Activated T-helper 2 cell treated with anti-CD3 and anti-CD28 coated beads, Interferon-gamma antibody, Interleukin-2, Interleukin-4, amounts not matched to agents 10 μg/mL and 5 μg/mL and 100 μg/mL, durations not matched to agents 14 hours and 24 hours and 36 hours (primary cell): ENCODE measurements at regions of chr3 and their contacts with region 1.

Region 1: DNA sequence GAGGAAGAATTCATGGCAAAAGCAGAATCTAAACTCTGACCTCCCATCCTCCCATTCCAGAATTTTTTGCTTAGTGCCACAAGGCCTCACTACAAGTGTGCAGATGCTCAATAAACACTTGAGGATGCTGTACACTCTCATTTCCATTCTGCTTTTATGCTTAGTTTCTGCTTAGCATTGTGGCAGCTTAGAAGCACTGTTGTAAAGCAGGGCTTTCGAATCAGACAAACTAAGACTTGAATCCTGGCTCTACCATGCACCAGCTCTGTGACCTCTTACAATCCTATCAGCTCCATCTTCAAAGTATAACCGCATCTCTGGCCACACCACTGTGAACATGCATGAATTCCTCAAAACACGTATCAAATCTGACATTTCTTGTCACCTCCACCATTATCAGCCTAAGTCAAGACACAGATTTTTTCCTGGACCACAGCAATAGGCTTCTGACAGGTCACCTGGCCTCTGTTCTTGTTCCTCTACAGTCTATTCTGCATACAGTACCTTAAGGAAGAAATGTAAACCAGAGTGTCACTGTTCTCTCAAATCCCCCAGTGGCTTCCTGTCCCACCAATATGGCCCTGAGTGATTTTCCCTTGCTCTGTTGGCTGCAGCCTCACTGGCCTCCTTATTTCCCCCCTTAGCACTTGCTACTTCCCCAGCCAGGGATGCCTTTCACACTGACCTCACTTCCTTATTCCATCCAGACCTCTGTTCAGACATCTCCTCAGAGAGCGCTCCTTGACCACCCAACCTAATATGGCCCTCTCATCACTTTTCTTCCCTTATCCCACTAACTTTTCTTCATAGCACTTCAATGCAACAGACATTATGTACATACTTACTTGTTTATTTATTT is 8.1 kb upstream of the PHC3 start:
- DNase-seq: no peak
- H3K4me3 Mint-ChIP-seq: no peak overlapping the region
- H3K27ac Mint-ChIP-seq: no peak overlapping the region
- H3K4me1 Mint-ChIP-seq: peaks cover 6% of the 10 kb centered on the region
- H3K27me3 Mint-ChIP-seq: peaks cover 9% of the 10 kb centered on the region

Region 2: GRCh38 chr3:170162630-170163029 is 27.0 kb before region 1 on chr3:
- intact Hi-C with region 1: no loop called
- DNase-seq: no peak
- H3K4me3 Mint-ChIP-seq: no peak overlapping the region
- H3K27ac Mint-ChIP-seq: peak overlapping the region; percentile 4
- H3K4me1 Mint-ChIP-seq: peaks cover 37% of the 10 kb centered on the region
- H3K27me3 Mint-ChIP-seq: no peaks in the 10 kb centered on the region

Region 3: DNA sequence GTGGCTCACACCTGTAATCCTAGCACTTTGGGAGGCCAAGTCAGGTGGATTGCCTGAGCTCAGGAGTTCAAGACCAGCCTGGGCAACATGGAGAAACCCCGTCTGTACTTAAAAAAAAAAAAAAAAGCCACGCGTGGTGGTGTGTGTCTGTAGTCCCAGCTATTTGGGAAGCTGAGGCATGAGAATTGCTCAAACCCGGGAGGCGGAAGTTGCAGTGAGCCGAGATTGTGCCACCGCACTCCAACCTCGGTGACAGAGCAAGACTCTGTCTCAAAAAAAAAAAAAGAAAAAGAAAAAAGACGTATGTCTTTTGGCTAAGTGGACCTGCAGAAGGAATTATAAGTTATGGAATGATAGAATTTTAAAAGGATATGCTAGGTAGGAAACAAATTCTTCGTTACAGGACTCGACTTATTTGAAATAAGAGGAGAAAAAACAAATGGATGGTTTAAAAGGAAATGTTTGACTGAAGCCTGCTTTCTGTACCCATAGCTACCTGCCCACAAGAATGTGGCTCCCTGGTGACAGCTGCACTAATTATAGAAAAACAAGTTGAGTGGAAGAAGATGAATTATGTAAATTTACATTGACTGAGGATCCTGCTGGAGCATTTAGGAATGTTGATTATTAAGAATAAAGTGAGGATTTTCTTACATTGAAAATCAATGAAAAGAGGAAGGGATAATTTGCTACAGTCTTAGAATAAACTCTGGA is 131.9 kb after region 1 on chr3:
- intact Hi-C with region 1: no loop called
- DNase-seq: no peak
- H3K4me3 Mint-ChIP-seq: no peak overlapping the region
- H3K27ac Mint-ChIP-seq: no peak overlapping the region
- H3K4me1 Mint-ChIP-seq: no peaks in the 10 kb centered on the region
- H3K27me3 Mint-ChIP-seq: peaks cover 18% of the 10 kb centered on the region

Region 4: DNA sequence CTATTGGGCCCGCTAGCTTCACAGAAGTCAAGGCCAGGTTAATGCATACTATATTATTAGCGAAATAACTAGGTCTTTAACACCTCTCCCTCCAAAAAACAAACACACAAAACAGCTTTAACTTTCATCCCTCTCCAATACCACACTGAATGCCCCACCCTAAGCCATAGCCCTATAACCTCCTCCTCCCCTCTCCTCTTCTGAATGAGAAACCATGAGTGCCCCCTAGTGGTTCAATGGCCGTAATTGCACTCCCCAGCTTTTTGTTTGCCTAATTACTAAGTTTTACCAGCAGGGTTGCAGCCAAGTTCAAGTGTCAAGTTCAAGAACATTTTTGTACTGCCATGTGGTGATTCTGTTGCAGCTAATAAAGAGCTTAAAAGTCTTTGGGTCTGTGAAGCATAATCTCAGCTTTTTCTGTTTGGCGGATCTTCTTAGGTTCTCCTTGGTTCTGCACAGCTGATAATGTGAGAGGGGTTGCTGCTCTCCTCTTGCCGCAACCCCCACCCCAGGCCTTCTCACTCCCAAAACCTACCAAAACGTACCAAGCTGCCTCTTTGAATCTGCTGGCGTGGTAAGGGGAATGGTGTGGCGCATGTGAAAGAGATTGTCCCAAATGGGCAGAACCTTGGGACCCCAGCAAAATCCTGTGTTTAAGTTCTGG is 622.4 kb after region 1 on chr3:
- intact Hi-C with region 1: loop called (anchors 5 kb)
- DNase-seq: peak; percentile 56
- H3K4me3 Mint-ChIP-seq: no peak overlapping the region
- H3K27ac Mint-ChIP-seq: no peak overlapping the region
- H3K4me1 Mint-ChIP-seq: peaks cover 10% of the 10 kb centered on the region
- H3K27me3 Mint-ChIP-seq: peaks cover 6% of the 10 kb centered on the region